Prostate gland (tissue), 2 donors: ENCODE measurements at regions of chr9 and their contacts with region 1.

Region 1: DNA sequence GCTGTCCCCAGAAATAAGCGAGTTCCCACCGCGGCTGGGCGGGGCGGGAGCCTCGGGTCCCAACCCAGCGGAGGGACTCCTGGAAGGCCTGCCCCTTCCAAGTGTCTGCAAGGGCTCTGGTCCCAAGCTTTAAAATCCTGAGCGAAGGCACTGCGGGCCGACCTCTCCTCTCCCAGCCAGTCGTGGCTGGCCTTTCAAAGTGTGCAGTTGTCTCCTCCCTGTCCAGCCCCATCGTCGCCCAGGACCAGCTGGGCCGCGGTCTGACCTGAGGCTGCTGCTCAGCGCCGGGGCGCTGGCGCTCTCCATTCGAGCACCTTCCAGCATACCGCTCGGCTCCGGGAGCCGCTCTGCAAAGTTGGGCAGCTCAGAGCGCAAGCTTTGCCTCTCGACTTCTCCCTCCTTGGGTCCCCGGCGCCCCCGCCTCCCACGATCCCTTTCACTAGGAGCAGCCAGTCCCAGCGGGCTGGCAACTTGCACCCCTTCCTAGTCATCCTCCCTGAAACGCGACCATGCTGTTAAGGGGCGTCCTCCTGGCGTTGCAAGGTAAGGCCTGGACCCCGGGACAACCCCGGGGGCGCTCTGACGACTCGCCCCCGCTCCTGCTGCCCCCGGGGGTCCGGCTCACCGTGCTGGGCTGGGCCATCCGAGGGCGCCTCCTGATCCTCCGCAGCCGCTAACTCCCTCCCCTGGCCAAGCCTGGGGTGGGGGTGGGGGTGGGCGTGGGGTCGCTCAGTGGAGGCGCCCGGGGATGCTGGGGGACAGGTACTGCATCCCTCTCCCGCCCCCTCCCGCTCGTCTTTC is at the start of gene MAMDC2:
- DNase-seq: no peak
- H3K4me3 ChIP-seq: peak within 1 kb of the TSS; percentile 25 to 31
- H3K27ac ChIP-seq: peak within 1 kb of the TSS; percentile 57 to 77
- H3K4me1 ChIP-seq: no peaks in the 10 kb centered on the region
- H3K27me3 ChIP-seq: no peaks in the 10 kb centered on the region
- CTCF ChIP-seq: no peak
- POLR2A ChIP-seq: no peak
- total RNA-seq, gene MAMDC2: 4.2 to 33.8 TPM

Region 2: DNA sequence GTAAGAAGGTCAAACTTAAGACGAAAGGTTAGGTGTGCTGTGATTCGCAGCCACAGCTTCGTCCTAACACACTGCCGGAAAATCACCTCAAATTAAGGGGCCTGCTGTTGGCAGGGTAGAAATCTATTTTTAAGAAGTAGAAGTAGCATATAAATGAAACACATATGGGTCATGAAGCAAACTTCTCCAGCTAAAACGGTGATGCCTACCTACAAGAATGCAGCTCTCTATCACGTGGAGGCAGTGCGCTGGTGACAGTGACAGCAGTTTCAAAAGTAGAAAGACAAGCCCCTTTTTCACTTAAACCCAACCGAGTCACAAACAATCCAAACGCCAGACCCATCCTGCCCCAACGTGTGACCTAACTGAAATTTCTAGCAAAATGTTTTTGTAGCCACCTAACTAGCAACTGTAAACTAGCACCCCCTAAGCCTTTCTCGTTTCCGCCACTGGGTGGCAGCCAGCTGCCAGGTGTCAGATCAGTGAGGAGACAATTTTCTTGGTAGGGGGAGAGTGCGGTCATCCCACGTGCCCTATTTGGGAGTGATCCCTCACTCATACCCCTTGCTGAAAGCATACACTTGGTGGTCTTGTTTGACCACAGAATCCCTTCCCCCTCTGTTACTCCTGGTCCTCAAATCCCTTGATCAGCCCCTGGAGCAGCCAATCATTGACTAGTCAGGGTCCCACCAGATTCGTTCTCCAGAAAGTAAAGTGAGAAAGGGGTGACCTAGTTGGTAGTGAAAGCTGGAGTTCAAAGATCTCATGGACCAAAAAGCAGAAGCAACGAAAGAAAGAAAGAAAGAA is 72.0 kb before region 1 on chr9:
- intact Hi-C with region 1: loop called (anchors 5 kb)
- DNase-seq: peak; percentile 58
- H3K4me3 ChIP-seq: no peak overlapping the region
- H3K27ac ChIP-seq: no peak overlapping the region
- H3K4me1 ChIP-seq: no peaks in the 10 kb centered on the region
- H3K27me3 ChIP-seq: no peaks in the 10 kb centered on the region
- CTCF ChIP-seq: peak; percentile 65 to 79 (median 76)
- POLR2A ChIP-seq: no peak

Region 3: DNA sequence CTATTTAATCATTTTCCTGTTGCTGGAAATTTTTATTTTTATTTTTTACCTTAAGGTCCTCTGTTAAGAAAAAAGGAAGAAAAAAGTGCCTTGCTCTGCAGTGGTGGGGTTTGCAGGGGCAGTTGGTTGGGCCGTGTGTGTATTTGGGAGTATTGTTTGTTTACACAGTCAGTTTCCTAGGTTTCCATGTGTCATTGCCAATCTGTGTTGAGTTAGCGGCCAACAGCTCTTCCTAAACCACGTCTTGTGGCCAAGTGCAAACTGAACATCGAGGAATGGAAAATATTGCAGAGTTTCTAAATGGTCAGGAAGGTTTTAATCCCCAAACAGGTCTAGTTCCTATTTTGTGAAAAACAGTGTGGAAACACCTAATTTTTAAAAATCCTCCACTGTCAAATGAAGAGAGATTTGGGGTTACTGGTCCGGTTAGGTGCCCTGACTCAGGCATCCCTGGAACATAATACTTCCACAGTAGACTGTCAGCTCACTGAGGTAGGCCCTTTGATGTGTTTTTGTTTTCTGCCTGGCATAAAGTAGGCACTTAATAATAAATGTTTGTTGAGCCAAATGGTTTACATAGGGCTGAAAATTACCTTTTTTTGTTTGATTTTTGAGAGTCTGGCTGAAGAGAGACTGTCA is 36.7 kb after region 1 on chr9:
- intact Hi-C with region 1: loop called (anchors 5 kb)
- DNase-seq: no peak
- H3K4me3 ChIP-seq: no peak overlapping the region
- H3K27ac ChIP-seq: peak overlapping the region in 1 of 2 donors; percentile 3
- H3K4me1 ChIP-seq: no peaks in the 10 kb centered on the region
- H3K27me3 ChIP-seq: no peaks in the 10 kb centered on the region
- CTCF ChIP-seq: no peak
- POLR2A ChIP-seq: no peak

Region 4: GRCh38 chr9:70413798-70414775 is 370.2 kb after region 1 on chr9 and contains the start of gene KLF9:
- intact Hi-C with region 1: loop called (anchors 10 kb)
- DNase-seq: peak; percentile 97
- H3K4me3 ChIP-seq: peak within 1 kb of the TSS; percentile 89 to 97
- H3K27ac ChIP-seq: peak within 1 kb of the TSS; percentile 100
- H3K4me1 ChIP-seq: peaks cover 9% of the 10 kb centered on the region
- H3K27me3 ChIP-seq: no peaks in the 10 kb centered on the region
- CTCF ChIP-seq: peak in 2 of 4 experiments; percentile 17 to 35
- POLR2A ChIP-seq: peak; percentile 97
- total RNA-seq, gene KLF9: 82.9 to 129 TPM